CD4-positive, alpha-beta T cell (primary cell): ENCODE measurements at regions of chr17 and their contacts with region 1.

Region 1: GRCh38 chr17:64975329-64976087 is 56.2 kb upstream of the LRRC37A3 start:
- DNase-seq: peak; percentile 93 to 100 (median 97)
- ATAC-seq: peak; percentile 77
- H3K4me3 ChIP-seq: peak overlapping the region; percentile 84
- H3K4me3 Mint-ChIP-seq: peak overlapping the region; percentile 93
- H3K27ac ChIP-seq: peak overlapping the region; percentile 98 to 99
- H3K27ac Mint-ChIP-seq: peak overlapping the region; percentile 99
- H3K4me1 ChIP-seq: peaks cover 37% of the 10 kb centered on the region
- H3K4me1 Mint-ChIP-seq: peaks cover 45% of the 10 kb centered on the region
- H3K27me3 ChIP-seq: no peaks in the 10 kb centered on the region
- H3K27me3 Mint-ChIP-seq: no peaks in the 10 kb centered on the region
- CTCF ChIP-seq: no peak

Region 2: GRCh38 chr17:64732336-64733009 is 243.0 kb before region 1 on chr17:
- CTCF ChIA-PET with region 1: no interaction called
- POLR2A ChIA-PET with region 1: no interaction called
- intact Hi-C with region 1: no loop called
- DNase-seq: no peak
- ATAC-seq: no peak
- H3K4me3 ChIP-seq: no peak overlapping the region
- H3K4me3 Mint-ChIP-seq: no peak overlapping the region
- H3K27ac ChIP-seq: no peak overlapping the region
- H3K27ac Mint-ChIP-seq: no peak overlapping the region
- H3K4me1 ChIP-seq: no peaks in the 10 kb centered on the region
- H3K4me1 Mint-ChIP-seq: peaks cover 7% of the 10 kb centered on the region
- H3K27me3 ChIP-seq: no peaks in the 10 kb centered on the region
- H3K27me3 Mint-ChIP-seq: no peaks in the 10 kb centered on the region
- CTCF ChIP-seq: no peak

Region 3: DNA sequence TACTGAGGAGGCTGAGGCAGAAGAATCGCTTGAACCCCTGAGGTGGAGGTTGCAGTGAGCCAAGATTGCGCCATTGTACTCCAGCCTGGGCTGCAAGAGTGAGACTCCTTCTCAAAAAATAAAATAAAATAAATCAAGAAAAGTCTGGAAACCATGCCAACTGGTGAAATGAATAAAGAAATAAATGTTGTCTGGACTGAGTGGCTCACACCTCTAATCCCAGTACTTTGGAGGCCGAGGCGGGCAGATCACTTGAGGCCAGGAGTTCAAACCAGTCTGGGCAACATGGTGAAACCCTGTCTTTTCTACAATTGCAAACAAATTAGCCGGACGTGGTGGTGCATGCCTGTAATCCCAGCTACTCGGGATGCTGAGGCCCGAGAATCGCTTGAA is 55.5 kb before region 1 on chr17:
- CTCF ChIA-PET with region 1: interaction called, 8 read pairs
- POLR2A ChIA-PET with region 1: interaction called, 12 read pairs
- intact Hi-C with region 1: no loop called
- DNase-seq: peak in 2 of 14 experiments; percentile 14 to 39
- ATAC-seq: no peak
- H3K4me3 ChIP-seq: peak overlapping the region; percentile 60
- H3K4me3 Mint-ChIP-seq: peak overlapping the region; percentile 91
- H3K27ac ChIP-seq: peak overlapping the region in 1 of 2 donors; percentile 65
- H3K27ac Mint-ChIP-seq: peak overlapping the region; percentile 83
- H3K4me1 ChIP-seq: peaks cover 13% of the 10 kb centered on the region
- H3K4me1 Mint-ChIP-seq: no peaks in the 10 kb centered on the region
- H3K27me3 ChIP-seq: no peaks in the 10 kb centered on the region
- H3K27me3 Mint-ChIP-seq: no peaks in the 10 kb centered on the region
- CTCF ChIP-seq: no peak

Region 4: GRCh38 chr17:64938290-64938689 is 37.2 kb before region 1 on chr17:
- CTCF ChIA-PET with region 1: no interaction called
- POLR2A ChIA-PET with region 1: no interaction called
- intact Hi-C with region 1: no loop called
- DNase-seq: no peak
- ATAC-seq: no peak
- H3K4me3 ChIP-seq: no peak overlapping the region
- H3K4me3 Mint-ChIP-seq: no peak overlapping the region
- H3K27ac ChIP-seq: no peak overlapping the region
- H3K27ac Mint-ChIP-seq: no peak overlapping the region
- H3K4me1 ChIP-seq: peaks cover 5% of the 10 kb centered on the region
- H3K4me1 Mint-ChIP-seq: no peaks in the 10 kb centered on the region
- H3K27me3 ChIP-seq: no peaks in the 10 kb centered on the region
- H3K27me3 Mint-ChIP-seq: no peaks in the 10 kb centered on the region
- CTCF ChIP-seq: no peak

Region 5: GRCh38 chr17:65027305-65027704 is 51.8 kb after region 1 on chr17:
- CTCF ChIA-PET with region 1: interaction called, 3 read pairs
- POLR2A ChIA-PET with region 1: interaction called, 10 read pairs
- intact Hi-C with region 1: no loop called
- DNase-seq: peak in 11 of 14 experiments; percentile 21 to 82 (median 42)
- ATAC-seq: peak; percentile 77
- H3K4me3 ChIP-seq: no peak overlapping the region
- H3K4me3 Mint-ChIP-seq: peak overlapping the region; percentile 81
- H3K27ac ChIP-seq: no peak overlapping the region
- H3K27ac Mint-ChIP-seq: peak overlapping the region; percentile 61
- H3K4me1 ChIP-seq: peaks cover 48% of the 10 kb centered on the region
- H3K4me1 Mint-ChIP-seq: peaks cover 94% of the 10 kb centered on the region
- H3K27me3 ChIP-seq: no peaks in the 10 kb centered on the region
- H3K27me3 Mint-ChIP-seq: no peaks in the 10 kb centered on the region
- CTCF ChIP-seq: peak; percentile 29

Region 6: GRCh38 chr17:65039336-65039988 is 64.0 kb after region 1 on chr17:
- CTCF ChIA-PET with region 1: no interaction called
- POLR2A ChIA-PET with region 1: interaction called, 30 read pairs
- intact Hi-C with region 1: no loop called
- DNase-seq: peak in 13 of 14 experiments; percentile 20 to 92 (median 47)
- ATAC-seq: peak; percentile 90
- H3K4me3 ChIP-seq: peak overlapping the region; percentile 28
- H3K4me3 Mint-ChIP-seq: peak overlapping the region; percentile 55
- H3K27ac ChIP-seq: peak overlapping the region; percentile 74 to 81
- H3K27ac Mint-ChIP-seq: peak overlapping the region; percentile 89
- H3K4me1 ChIP-seq: peaks cover 75% of the 10 kb centered on the region
- H3K4me1 Mint-ChIP-seq: peaks cover 81% of the 10 kb centered on the region
- H3K27me3 ChIP-seq: no peaks in the 10 kb centered on the region
- H3K27me3 Mint-ChIP-seq: no peaks in the 10 kb centered on the region
- CTCF ChIP-seq: no peak

Region 7: GRCh38 chr17:65122836-65123756 is 147.6 kb after region 1 on chr17:
- CTCF ChIA-PET with region 1: no interaction called
- POLR2A ChIA-PET with region 1: interaction called, 11 read pairs
- intact Hi-C with region 1: loop called in 1 of 2 experiments (anchors 5 kb)
- DNase-seq: peak; percentile 72 to 93 (median 77)
- ATAC-seq: peak; percentile 95
- H3K4me3 ChIP-seq: peak overlapping the region; percentile 81
- H3K4me3 Mint-ChIP-seq: peak overlapping the region; percentile 88
- H3K27ac ChIP-seq: peak overlapping the region; percentile 52 to 87
- H3K27ac Mint-ChIP-seq: peak overlapping the region; percentile 87
- H3K4me1 ChIP-seq: peaks cover 15% of the 10 kb centered on the region
- H3K4me1 Mint-ChIP-seq: peaks cover 14% of the 10 kb centered on the region
- H3K27me3 ChIP-seq: no peaks in the 10 kb centered on the region
- H3K27me3 Mint-ChIP-seq: peaks cover 10% of the 10 kb centered on the region
- CTCF ChIP-seq: no peak